Activated naive CD4-positive, alpha-beta T cell treated with anti-CD3 and anti-CD28 coated beads for 36 hours (primary cell): ENCODE measurements at regions of chr19 and their contacts with region 1.

Region 1: GRCh38 chr19:34999498-35000341 is at the start of gene GRAMD1A:
- DNase-seq: peak; percentile 80
- H3K4me3 Mint-ChIP-seq: peak within 1 kb of the TSS; percentile 98
- H3K27ac Mint-ChIP-seq: peak within 1 kb of the TSS; percentile 96
- H3K4me1 Mint-ChIP-seq: peaks cover 57% of the 10 kb centered on the region
- H3K27me3 Mint-ChIP-seq: no peaks in the 10 kb centered on the region
- total RNA-seq, gene GRAMD1A: 117 to 125 TPM

Region 2: DNA sequence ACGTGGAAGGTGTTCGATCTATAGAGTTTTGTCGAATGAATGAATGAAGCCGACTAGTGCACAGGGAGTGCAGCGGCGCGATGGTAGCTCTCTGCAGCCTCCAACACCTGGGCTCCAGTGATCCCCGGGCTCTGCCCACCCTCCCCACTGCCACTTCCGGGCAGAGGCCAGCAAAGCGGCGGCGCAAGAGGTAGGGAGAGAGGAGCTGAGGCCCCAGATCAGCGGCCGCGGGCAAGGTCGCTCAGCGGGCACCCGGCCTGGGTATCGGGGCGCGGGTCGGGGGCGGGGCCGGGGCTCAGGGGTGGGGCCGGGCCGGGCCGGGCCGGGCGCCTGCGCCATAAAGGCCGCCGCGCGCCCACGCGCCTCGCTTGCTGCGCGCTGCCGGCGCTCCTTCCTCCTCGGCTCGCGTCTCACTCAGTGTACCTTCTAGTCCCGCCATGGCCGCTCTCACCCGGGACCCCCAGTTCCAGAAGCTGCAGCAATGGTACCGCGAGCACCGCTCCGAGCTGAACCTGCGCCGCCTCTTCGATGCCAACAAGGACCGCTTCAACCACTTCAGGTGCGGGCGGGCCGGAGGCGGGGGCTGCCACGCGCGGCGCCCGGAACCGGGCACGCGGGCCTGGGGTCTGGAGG is 634.8 kb before region 1 on chr19 and contains the start of gene GPI:
- CTCF ChIA-PET with region 1: no interaction called
- intact Hi-C with region 1: loop called (anchors 2 kb)
- DNase-seq: peak; percentile 67
- H3K4me3 Mint-ChIP-seq: peak within 1 kb of the TSS; percentile 94
- H3K27ac Mint-ChIP-seq: peak within 1 kb of the TSS; percentile 74
- H3K4me1 Mint-ChIP-seq: peaks cover 47% of the 10 kb centered on the region
- H3K27me3 Mint-ChIP-seq: no peaks in the 10 kb centered on the region
- total RNA-seq, gene GPI: 542 to 553 TPM

Region 3: GRCh38 chr19:34926685-34927375 is 72.9 kb before region 1 on chr19 and contains the start of gene ZNF30:
- CTCF ChIA-PET with region 1: no interaction called
- intact Hi-C with region 1: loop called (anchors 5 kb)
- DNase-seq: peak; percentile 93
- H3K4me3 Mint-ChIP-seq: peak within 1 kb of the TSS; percentile 89
- H3K27ac Mint-ChIP-seq: peak within 1 kb of the TSS; percentile 44
- H3K4me1 Mint-ChIP-seq: peaks cover 13% of the 10 kb centered on the region
- H3K27me3 Mint-ChIP-seq: no peaks in the 10 kb centered on the region
- total RNA-seq, gene ZNF30: 4.4 to 5.5 TPM

Region 4: DNA sequence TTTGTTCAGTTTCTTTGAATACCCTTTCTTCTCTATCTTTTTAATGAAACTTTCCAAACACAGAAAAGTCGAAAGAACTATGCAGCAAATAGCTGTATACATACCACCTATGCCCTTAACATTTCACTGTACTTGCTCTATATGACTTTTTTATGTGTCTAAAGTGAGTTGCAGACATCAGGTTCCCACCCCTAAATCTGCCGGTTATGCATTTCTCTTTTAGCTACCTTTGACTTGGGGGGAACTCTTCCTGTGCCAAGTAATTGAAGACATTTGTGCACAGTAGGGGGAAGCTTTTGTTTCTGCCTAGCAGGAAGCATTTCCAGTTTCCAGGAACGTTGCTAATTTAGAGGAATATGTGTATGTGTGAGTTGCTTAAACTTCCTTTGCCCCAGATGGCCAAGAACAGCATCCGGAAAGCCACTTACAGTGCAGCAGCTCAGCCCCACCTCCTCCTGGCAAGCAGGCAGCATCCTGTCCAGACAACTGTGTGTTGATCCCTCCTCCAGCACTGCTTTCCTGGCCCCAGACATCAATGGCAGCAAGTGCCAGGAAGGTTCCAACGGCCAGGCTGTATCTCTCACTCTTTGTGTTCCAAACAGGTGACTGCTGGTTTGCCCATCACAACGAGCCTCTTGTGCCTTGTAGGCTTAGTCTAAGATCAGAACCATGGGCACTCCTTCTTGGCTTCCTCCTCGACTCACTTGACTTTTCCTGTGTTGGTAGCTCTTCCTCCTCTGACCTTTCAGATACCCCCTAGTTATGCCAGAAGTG is 14.3 kb before region 1 on chr19:
- CTCF ChIA-PET with region 1: interaction called, 4 read pairs
- intact Hi-C with region 1: loop called (anchors 1 kb)
- DNase-seq: peak; percentile 61
- H3K4me3 Mint-ChIP-seq: peak overlapping the region; percentile 65
- H3K27ac Mint-ChIP-seq: peak overlapping the region; percentile 80
- H3K4me1 Mint-ChIP-seq: peaks cover 33% of the 10 kb centered on the region
- H3K27me3 Mint-ChIP-seq: no peaks in the 10 kb centered on the region

Region 5: GRCh38 chr19:35076657-35077056 is 76.9 kb after region 1 on chr19:
- CTCF ChIA-PET with region 1: no interaction called
- intact Hi-C with region 1: no loop called
- DNase-seq: no peak
- H3K4me3 Mint-ChIP-seq: no peak overlapping the region
- H3K27ac Mint-ChIP-seq: no peak overlapping the region
- H3K4me1 Mint-ChIP-seq: no peaks in the 10 kb centered on the region
- H3K27me3 Mint-ChIP-seq: no peaks in the 10 kb centered on the region

Region 6: DNA sequence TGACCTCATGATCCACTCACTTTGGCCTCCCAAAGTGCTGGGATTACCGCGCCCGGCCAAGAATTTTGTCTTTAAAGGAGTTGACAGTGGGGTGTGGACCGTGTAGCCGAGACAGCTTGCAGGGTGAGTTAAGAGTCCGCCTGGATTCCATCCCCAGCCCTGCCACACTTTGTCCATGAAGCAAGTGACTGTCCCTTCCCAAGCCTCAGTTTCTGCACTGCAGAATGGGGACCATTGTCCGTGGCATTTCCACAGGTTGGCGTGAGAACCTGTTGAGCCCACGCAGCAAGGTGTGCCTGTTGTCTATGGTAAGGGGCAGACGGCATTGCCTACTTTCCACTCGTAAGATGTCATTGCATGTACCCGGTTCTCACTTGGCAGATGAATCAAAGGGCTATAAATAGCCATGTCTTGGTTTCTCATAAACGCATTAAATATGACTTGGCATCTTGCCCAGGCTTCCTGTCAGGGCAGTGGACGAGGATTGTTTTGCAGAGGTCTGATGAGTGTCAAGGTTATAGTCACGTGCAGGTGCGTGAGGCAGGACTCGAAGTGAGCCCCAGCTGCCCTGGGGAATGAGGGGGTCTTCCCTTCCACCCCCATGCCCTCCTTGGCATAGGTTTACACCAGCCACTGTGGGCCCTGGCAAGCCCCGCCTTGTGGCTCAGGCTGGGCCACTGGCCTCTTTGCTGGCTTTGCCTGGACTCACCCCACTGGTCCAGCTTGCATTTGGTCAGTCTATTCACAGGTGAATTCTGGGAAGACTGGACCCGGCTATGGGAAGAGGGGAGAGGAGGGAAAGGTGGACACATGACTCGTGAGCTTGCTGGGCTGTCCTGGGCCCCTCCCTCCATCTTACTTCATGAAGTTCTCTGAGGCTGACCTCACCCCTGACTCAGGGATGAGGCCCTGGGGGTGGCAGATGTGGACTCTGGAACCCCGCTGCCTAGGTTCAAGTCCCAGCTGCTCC is 214.2 kb after region 1 on chr19:
- CTCF ChIA-PET with region 1: no interaction called
- intact Hi-C with region 1: loop called (anchors 10 kb)
- DNase-seq: peak; percentile 92
- H3K4me3 Mint-ChIP-seq: no peak overlapping the region
- H3K27ac Mint-ChIP-seq: peak overlapping the region; percentile 97
- H3K4me1 Mint-ChIP-seq: peaks cover 58% of the 10 kb centered on the region
- H3K27me3 Mint-ChIP-seq: no peaks in the 10 kb centered on the region

Region 7: DNA sequence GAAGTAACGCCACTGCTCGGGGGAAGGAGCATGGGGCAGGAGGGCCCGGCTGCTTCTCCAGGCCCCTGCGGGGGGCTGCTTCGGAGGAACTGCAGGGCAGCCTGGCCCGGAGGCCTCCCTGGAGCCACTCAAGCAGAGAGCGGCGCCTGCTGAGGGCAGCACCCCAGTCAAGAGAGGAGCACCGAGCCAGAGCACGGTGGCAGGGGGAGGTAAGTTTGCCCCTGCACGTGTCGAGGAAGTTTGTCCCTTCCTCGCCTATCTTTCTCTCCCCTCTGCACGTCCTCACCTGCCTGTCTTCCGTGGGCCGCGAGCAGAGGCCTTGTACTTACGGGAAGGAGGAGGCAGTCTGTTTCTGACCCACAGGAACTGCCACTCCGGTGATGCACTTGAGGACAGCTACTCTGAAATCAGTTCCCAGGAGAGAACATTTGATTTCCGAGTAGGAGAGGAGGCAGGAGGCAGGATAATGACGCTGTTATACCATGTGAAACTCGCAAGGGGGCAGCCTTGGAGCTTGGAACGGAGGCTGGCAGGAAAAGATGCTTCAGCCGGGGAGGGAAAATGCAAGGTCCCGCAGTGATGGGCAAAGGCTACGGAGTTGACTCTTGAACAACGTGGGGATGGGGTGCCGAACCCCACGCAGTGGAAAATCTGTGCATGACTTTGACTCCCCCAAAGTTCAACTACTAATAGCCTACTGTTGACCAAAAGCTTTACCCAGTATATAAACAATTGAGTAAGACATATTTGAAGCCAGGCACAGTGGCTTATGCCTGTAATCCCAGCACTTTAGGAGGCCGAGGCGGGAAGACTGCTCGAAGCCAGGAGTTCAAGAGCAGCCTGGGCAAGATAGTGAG is 353.0 kb after region 1 on chr19:
- CTCF ChIA-PET with region 1: no interaction called
- intact Hi-C with region 1: no loop called
- DNase-seq: peak; percentile 85
- H3K4me3 Mint-ChIP-seq: no peak overlapping the region
- H3K27ac Mint-ChIP-seq: no peak overlapping the region
- H3K4me1 Mint-ChIP-seq: peaks cover 22% of the 10 kb centered on the region
- H3K27me3 Mint-ChIP-seq: no peaks in the 10 kb centered on the region